ENCODE measurements at regions of chr2 and their contacts with region 1.

Region 1: DNA sequence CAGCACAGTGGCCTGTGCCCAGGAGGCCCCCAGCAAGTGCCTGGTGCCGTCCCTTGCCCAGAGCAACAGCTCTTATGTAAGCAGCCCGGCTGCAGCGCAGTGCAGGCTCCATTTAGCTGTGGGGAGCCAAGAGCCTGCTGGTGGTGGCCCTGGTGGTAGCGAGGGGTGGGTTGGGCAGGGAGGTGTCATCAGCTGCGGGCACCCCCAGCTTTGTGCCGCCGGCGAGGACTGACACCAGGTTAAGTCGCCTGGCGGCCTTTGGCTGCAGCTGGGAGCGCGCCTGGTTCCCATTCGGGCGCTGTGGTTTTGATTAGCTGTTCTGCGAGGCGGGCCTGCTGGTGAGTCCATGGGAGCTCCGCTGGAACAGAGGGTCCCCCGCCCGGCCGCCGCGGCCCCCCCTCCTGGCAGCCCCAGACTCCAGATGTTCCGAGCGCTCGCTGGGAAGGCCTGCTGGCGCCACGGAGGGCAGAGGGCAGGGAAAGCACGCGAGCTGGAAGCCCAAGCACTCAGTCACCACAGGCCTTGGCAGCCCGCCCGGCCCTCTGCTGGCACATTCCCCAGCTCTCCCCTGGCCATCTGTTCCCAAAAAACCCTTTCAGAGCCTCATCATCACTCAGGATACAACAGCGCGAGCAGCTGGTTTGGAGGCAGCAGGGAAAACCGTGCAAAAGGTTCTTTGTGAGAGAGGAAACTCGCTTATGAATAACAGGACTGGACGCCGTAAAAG is 18.4 kb downstream of the ATOH8 start:
- DNase-seq: peak; percentile 100
- H3K4me3 ChIP-seq: peak overlapping the region in 3 of 4 donors; percentile 14 to 28 (median 27)
- H3K27ac ChIP-seq: peak overlapping the region; percentile 87 to 94 (median 89)
- H3K4me1 ChIP-seq: peaks cover 0 to 78% (median 74%) of the 10 kb centered on the region in 4 donors
- H3K27me3 ChIP-seq: no peaks in the 10 kb centered on the region
- CTCF ChIP-seq: peak in 2 of 4 experiments; percentile 14 to 34
- EP300 ChIP-seq: peak; percentile 63 to 95 (median 74)
- POLR2A ChIP-seq: no peak

Region 2: GRCh38 chr2:85737481-85737880 is 34.7 kb before region 1 on chr2:
- intact Hi-C with region 1: loop called (anchors 5 kb)
- DNase-seq: peak; percentile 96
- H3K4me3 ChIP-seq: no peak overlapping the region
- H3K27ac ChIP-seq: peak overlapping the region; percentile 70 to 86 (median 82)
- H3K4me1 ChIP-seq: peaks cover 0 to 62% (median 54%) of the 10 kb centered on the region in 4 donors
- H3K27me3 ChIP-seq: no peaks in the 10 kb centered on the region
- CTCF ChIP-seq: no peak
- EP300 ChIP-seq: peak in 2 of 4 donors; percentile 14 to 15
- POLR2A ChIP-seq: no peak

Region 3: DNA sequence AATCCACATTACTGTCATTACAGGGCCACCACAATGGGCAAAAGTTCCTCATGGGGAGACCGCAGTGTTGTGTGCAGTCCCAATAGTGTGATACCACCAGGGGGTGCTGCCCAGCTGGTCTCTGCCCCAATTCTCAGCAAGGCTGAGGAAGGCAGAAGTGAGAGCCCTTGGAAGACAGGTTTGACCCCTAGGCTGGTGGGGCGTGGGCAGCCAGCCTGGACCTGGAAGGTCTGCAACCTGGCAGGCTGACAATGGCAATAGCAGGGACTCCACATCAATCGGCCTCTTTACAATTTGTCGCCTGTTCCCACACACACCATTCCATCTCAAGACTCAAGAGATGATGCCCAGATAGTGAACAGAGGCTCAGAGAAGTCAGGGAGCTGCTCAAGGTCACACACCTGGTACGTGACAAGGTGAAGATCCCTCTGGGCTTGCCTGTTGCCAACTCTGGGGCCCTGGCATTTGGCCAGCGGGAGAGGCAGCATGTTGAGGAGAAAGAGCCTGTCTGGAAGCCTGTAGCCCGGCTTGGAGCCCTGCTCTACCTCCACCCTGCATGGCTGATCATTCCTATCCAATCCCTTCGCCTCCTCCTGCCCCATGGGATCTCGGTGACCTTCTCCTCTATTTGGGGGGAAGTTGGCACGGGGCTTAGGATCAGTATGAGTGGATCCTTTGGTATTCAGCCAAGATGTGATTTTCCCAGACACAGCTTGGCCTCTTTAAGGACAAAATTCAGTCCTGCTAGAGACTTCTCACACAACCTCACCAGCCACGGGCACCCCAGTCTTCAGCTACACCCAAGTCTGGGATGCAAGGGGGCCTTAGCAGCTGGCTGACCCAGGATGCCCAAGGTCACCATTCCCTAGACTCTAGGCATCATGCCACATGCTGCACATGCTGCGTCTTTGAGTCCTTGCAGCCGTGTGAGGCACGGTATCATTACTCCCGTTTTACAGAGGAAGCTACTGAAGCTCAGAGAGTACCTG is 21.3 kb before region 1 on chr2:
- intact Hi-C with region 1: loop called (anchors 1 kb)
- DNase-seq: peak; percentile 87
- H3K4me3 ChIP-seq: no peak overlapping the region
- H3K27ac ChIP-seq: peak overlapping the region in 3 of 4 donors; percentile 23 to 74 (median 26)
- H3K4me1 ChIP-seq: peaks cover 0 to 72% (median 63%) of the 10 kb centered on the region in 4 donors
- H3K27me3 ChIP-seq: no peaks in the 10 kb centered on the region
- CTCF ChIP-seq: peak; percentile 72 to 82 (median 74)
- EP300 ChIP-seq: no peak
- POLR2A ChIP-seq: no peak

Region 4: DNA sequence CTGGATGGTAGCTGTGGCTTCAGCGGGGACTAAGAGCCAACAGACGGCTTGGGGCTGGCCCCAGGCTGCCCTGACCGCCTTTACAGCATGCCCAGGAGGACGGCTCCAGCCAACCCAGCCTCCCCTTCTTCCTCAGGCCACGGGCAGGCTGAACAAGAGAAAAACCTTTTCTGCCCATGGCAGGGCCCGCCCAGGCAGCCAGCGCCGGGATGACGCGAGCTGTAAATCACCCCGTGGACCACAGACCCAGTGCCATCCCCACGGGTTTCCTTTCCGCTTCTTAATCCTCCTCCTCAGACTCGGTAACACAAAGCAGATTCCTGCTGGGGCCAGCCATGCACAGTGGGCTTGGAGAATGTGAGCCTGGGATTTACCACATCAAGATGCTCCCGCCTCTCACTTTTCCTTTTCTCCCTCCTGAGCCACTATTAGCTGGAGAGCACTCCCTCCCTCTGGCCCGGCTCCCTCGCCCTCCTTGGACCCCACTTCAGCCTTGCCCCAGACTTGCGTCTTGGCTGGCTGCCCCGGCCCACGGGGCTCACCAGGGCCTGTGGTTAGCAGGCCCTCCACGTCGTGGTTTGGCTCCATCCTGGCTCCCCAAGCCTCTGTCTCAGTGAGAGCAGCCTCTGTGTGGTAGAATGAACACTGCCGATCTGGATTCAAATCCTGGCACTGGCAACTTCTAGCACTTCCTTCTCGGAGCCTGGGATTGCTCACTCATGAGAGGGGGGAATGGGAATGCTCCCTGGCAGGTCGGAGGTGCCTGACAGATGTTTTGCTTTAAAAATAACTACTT is 13.0 kb after region 1 on chr2:
- intact Hi-C with region 1: loop called (anchors 1 kb)
- DNase-seq: peak; percentile 85
- H3K4me3 ChIP-seq: peak overlapping the region in 1 of 4 donors; percentile 2
- H3K27ac ChIP-seq: peak overlapping the region; percentile 71 to 86 (median 80)
- H3K4me1 ChIP-seq: peaks cover 0 to 44% (median 31%) of the 10 kb centered on the region in 4 donors
- H3K27me3 ChIP-seq: no peaks in the 10 kb centered on the region
- CTCF ChIP-seq: no peak
- EP300 ChIP-seq: no peak
- POLR2A ChIP-seq: no peak

Measured in sigmoid colon (tissue), 7 donors.